CD8-positive, alpha-beta T cell (primary cell): ENCODE measurements at regions of chr9 and their contacts with region 1.

Region 1: GRCh38 chr9:101087426-101087825 is 58.9 kb downstream of the PLPPR1 start:
- DNase-seq: no peak
- ATAC-seq: no peak
- H3K4me3 ChIP-seq: no peak overlapping the region
- H3K4me3 Mint-ChIP-seq: no peak overlapping the region
- H3K27ac ChIP-seq: no peak overlapping the region
- H3K27ac Mint-ChIP-seq: no peak overlapping the region
- H3K4me1 ChIP-seq: no peaks in the 10 kb centered on the region
- H3K4me1 Mint-ChIP-seq: no peaks in the 10 kb centered on the region
- H3K27me3 ChIP-seq: no peaks in the 10 kb centered on the region
- H3K27me3 Mint-ChIP-seq: no peaks in the 10 kb centered on the region
- CTCF ChIP-seq: no peak

Region 2: GRCh38 chr9:100515578-100516494 is 571.6 kb before region 1 on chr9:
- CTCF ChIA-PET with region 1: no interaction called
- POLR2A ChIA-PET with region 1: no interaction called
- intact Hi-C with region 1: loop called in 1 of 2 experiments (anchors 5 kb)
- DNase-seq: no peak
- ATAC-seq: no peak
- H3K4me3 ChIP-seq: no peak overlapping the region
- H3K4me3 Mint-ChIP-seq: no peak overlapping the region
- H3K27ac ChIP-seq: no peak overlapping the region
- H3K27ac Mint-ChIP-seq: no peak overlapping the region
- H3K4me1 ChIP-seq: no peaks in the 10 kb centered on the region
- H3K4me1 Mint-ChIP-seq: no peaks in the 10 kb centered on the region
- H3K27me3 ChIP-seq: no peaks in the 10 kb centered on the region
- H3K27me3 Mint-ChIP-seq: no peaks in the 10 kb centered on the region
- CTCF ChIP-seq: no peak